HEK293 (cell line): ENCODE measurements at regions of chr6 and their contacts with region 1.

Region 1: DNA sequence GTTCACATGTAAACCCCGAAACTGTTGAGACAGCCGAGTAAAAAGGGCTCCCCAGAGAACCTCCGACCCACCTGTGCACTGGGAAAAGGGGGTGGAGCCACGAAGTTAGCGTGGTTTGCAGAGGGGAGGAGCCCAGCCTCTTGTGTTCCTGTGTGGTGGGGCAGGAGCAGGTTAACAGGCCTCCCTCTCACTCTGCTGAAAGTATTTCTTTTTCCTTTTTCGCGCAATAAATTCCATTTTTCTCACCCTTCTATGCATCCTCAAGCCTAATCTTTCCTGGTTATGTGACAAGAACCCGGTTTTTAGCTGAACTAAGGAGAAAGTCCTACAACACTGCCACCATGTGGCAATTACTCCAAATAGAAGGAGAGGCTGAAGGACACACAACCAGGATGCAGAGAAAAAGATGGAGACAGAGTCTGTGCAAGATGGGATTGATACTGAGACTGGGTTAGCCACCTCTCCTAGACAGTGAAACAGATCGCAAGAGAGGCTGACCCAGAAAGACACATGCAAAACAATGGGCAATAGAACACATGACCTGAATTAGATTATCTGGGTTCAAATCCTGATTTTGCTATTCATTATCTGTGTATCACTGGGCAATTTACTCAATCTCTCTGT is 168.7 kb upstream of the PRSS16 start:
- H3K4me3 ChIP-seq: peak overlapping the region; percentile 52
- H3K27ac ChIP-seq: no peak overlapping the region
- H3K4me1 ChIP-seq: no peaks in the 10 kb centered on the region
- CTCF ChIP-seq: peak; percentile 79

Region 2: GRCh38 chr6:26607434-26608230 is 471.2 kb before region 1 on chr6:
- CTCF ChIA-PET with region 1: interaction called, 18 read pairs
- POLR2A ChIA-PET with region 1: no interaction called
- H3K4me3 ChIP-seq: no peak overlapping the region
- H3K27ac ChIP-seq: no peak overlapping the region
- H3K4me1 ChIP-seq: no peaks in the 10 kb centered on the region
- CTCF ChIP-seq: peak; percentile 50; the same call in 1 of the 2 replicates

Region 3: DNA sequence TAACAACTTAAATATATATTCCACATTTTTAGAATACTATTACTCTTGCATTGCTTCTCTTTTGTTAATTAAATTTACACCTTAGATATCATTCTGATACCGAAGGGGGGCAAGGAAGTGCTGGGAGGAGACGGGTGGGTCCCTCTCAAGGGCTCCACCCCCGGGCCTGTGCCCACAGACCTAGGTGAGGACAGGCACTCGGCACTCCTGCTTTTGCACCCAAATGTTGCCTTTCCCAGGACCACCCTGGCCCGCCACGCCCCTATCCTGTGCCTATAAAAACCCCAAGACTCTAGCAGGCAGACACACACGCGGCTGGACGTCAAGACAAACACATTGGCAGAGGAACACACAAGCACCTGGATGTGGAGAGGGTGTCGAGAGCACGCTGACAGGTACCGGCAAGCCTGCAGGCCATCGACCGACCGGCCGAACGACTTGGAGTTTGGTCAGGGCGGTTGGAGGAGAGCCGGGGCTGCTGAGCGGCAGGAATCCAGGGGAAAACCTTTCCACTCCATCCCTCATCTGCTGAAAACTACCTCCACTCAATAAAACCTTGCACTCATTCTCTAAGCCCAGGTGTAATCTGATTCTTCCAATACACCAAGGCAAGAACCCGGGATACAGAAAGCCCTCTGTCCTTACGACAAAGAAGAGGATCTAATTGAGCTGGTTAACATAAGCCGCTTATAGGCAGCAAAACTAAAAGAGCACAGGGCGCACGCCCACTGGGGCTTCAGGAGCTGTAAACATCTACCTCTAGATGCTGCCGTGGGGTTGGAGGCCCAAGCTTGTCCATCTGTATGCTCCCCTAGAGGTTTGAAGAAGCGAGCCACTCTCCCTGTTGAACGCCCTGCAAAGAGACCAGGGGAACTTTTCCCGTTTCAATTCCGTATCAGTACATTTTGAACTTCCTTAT is 28.7 kb before region 1 on chr6:
- CTCF ChIA-PET with region 1: interaction called, 13 read pairs
- POLR2A ChIA-PET with region 1: no interaction called
- H3K4me3 ChIP-seq: no peak overlapping the region
- H3K27ac ChIP-seq: no peak overlapping the region
- H3K4me1 ChIP-seq: no peaks in the 10 kb centered on the region
- CTCF ChIP-seq: no peak

Region 4: DNA sequence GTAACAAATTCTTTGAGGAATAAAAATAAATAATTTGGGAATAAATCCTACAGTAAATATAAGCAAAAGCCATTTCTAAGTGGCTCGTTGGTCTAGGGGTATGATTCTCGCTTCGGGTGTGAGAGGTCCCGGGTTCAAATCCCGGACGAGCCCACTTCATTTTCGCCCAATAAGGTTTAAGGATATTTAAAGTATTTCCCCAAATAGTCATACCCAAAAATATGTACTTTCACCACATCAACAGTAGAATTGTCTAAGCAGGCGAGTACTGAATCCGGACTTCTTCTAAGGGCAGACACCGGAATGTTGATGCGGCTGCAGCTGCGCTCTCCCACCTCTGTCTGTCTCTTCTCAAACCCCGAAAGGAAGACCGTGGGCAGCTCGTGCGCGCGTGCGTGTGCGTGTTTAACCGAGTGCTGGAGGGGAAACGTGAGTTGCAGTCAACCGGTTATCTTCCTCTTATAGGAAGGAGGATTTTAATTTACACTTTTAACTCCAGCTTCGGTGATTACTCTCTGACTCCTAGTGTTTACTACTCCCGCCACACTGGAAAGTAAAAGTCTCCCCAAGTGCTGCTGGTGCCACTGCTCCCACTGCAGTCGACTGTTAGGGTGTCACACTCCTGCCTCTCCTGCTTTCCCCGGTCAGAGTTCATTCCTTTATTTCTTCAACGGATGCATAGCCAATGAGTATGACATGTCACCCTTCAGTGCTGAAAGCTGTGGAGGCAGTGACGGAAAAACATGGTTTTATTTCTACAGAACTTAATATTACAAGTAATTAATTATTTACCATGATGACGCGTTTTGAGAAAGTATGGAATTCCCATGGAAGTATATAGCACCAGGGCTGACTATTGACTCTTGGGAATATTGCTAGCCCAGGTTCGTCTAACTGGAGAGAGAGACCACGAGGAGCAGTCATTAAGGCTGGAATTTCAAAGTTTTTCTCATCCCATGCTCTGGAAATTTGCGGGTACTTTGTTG is 13.1 kb after region 1 on chr6:
- CTCF ChIA-PET with region 1: interaction called, 15 read pairs
- POLR2A ChIA-PET with region 1: no interaction called
- H3K4me3 ChIP-seq: peak overlapping the region; percentile 75
- H3K27ac ChIP-seq: no peak overlapping the region; the same call in 1 of the 2 replicates
- H3K4me1 ChIP-seq: no peaks in the 10 kb centered on the region
- CTCF ChIP-seq: no peak